Right cardiac atrium (tissue), 5 donors: ENCODE measurements at regions of chr2 and their contacts with region 1.

Region 1: DNA sequence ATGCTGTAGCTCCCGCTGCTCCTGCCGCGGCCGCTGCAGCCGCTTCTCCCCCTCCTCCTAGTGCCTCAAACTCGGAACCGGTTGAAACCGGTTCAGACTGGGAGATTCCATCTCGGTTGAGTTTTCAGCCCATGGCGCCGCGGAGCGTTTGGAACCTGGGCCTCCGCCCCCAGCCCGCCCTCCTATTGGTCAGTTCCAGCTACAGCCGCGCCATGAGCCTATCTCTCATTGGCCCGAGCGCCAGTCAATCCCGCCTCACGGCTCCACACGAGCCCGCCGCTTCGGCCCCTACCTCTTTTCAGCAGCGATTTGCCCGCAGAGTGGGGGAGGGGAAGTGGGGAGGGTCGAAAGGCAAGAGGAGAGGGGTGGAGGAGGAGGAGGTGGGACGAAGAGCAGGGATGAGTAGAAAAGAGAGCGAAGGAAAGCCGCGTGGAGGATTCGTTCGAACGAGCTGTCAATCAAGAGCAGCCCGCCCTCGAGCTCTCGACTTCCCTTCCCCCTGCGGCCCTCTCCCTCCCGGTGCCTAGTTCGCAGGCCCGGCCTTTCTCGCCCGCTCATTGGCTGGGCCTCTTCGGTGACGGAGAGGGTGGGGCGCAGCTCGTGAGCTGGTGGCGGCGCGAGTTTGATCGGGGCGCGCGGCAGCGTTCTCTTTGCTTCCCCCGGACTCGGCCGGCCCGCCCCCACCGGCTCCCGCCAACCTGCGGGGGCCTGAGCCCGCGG is at the start of gene XPO1:
- DNase-seq: peak; percentile 99 to 100 (median 100)
- ATAC-seq: peak; percentile 96
- H3K4me3 ChIP-seq: peak within 1 kb of the TSS; percentile 99
- H3K27ac ChIP-seq: peak within 1 kb of the TSS; percentile 99
- H3K4me1 ChIP-seq: peaks cover 2% of the 10 kb centered on the region
- H3K27me3 ChIP-seq: no peaks in the 10 kb centered on the region
- total RNA-seq, gene XPO1: 53.7 to 81.7 (median 62.2) TPM

Region 2: DNA sequence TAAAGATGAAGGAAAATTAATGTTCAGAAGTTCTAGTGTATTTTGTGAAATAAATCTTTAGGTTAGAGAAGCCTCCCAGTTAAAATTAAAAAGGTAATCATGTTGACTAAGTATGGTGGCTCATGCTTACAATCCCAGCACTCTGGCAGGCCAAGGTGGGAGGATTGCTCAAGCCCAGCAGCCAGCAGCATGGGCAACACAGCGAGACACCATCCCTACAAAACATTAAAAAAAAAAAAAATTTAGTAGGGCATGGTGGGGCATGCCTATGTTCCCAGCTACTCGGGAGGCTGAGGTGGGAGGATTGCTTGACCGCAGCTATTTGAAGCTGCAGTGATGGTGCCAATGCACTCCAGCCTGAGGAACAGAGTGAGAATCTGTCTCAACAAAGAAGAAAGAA is 18.1 kb before region 1 on chr2:
- intact Hi-C with region 1: no loop called
- DNase-seq: no peak
- ATAC-seq: no peak
- H3K4me3 ChIP-seq: no peak overlapping the region
- H3K27ac ChIP-seq: no peak overlapping the region
- H3K4me1 ChIP-seq: no peaks in the 10 kb centered on the region
- H3K27me3 ChIP-seq: no peaks in the 10 kb centered on the region

Region 3: DNA sequence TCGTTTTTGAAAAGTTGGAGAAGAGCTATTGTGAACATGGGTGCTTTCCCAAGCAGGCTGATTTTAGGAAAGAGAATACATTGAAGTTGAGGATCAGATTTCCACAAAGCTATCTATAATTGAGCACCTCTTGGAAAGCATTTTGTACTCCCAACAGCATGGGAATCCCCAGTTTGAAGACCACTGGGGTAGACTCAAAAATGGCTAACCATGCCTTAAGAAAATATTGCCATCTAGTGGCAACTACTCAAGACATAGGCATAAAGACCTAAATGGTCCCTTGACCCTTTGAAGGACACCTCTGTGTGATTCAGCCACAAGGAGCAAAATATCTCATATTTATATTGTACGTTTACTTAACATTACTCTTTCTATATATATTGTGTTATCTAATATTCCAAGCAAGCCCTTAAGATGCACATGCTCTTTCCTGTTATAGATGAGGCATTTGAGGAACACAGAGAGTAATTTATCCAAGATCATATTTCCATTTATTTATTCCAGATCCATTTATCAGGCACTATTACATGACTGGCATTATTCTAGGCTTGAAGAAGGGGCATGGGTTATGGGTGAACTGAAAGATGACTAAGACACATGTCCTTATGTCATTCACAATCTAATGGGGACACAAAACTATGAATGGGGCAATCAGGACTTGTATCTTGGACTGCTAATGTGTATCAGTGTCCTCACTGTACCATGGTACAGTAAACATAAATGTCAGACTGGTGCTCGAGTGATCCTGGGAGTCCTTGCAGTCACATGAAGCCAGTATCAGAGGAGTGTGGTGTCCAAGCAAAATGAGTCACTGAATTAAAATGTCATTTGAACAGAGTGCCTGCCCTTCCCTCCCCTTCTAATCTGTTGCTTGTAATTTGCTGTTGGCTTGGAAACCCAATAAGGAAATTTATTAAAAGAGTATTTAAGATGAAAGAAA is 120.8 kb after region 1 on chr2:
- intact Hi-C with region 1: loop called in 1 of 4 experiments (anchors 10 kb)
- DNase-seq: no peak
- ATAC-seq: peak; percentile 89 to 92
- H3K4me3 ChIP-seq: no peak overlapping the region
- H3K27ac ChIP-seq: peak overlapping the region; percentile 42
- H3K4me1 ChIP-seq: peaks cover 7% of the 10 kb centered on the region
- H3K27me3 ChIP-seq: no peaks in the 10 kb centered on the region

Region 4: GRCh38 chr2:61764035-61764800 is 225.9 kb after region 1 on chr2:
- intact Hi-C with region 1: loop called in 1 of 4 experiments (anchors 5 kb)
- DNase-seq: peak; percentile 98 to 99 (median 99)
- ATAC-seq: peak; percentile 100
- H3K4me3 ChIP-seq: peak overlapping the region; percentile 73
- H3K27ac ChIP-seq: peak overlapping the region; percentile 99
- H3K4me1 ChIP-seq: no peaks in the 10 kb centered on the region
- H3K27me3 ChIP-seq: no peaks in the 10 kb centered on the region

Region 5: DNA sequence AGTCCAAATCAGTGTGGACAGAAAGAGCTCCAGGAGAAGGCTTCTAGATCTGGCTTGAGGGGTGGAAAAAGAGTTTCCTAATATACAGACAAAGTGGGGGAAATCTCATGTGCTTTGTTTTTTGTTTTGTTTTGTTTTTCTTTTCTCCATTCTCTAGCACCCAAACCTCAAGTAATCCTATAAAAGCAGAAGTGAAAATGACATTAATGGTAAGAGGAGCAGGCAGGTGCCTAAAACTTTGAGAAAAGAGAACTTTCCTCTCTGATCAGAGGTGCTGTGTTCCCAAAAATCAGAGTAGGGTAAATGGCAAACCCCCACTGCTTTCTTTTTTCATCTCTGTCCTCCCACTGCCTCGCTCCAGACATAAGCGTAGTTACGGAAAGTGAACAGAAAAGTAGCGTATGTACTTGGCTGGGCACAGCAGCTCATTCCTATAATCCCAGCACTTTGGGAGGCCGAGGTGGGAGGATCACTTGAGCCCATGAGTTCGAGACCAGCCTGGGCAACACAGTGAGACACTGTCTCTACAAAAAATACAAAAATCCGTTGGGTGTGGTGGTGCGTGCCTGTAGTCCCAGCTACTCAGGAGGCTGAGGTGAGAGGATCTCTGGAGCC is 237.7 kb after region 1 on chr2:
- intact Hi-C with region 1: loop called in 1 of 4 experiments (anchors 10 kb)
- DNase-seq: no peak
- ATAC-seq: no peak
- H3K4me3 ChIP-seq: no peak overlapping the region
- H3K27ac ChIP-seq: no peak overlapping the region
- H3K4me1 ChIP-seq: no peaks in the 10 kb centered on the region
- H3K27me3 ChIP-seq: no peaks in the 10 kb centered on the region

Region 6: DNA sequence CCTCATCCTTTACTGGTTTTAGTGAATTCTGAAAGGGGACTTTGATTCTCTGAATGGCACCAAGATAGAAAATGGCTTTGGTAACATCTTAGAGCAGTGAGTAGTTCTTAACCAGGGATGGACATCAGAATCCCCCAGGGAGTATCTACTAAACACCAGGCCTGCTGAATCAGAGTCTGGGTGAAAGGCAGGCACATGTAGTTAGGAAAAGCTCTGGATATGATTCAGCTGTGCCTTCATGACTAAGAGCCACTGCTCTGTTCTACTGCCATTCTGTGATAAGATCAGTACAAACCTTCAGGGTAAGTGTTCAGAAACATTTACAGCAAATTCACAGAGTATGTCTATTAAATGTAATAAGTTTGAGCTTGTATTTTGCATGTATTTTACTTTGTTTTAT is 611.3 kb after region 1 on chr2:
- intact Hi-C with region 1: no loop called
- DNase-seq: no peak
- ATAC-seq: peak; percentile 56 to 74
- H3K4me3 ChIP-seq: no peak overlapping the region
- H3K27ac ChIP-seq: no peak overlapping the region
- H3K4me1 ChIP-seq: peaks cover 7% of the 10 kb centered on the region
- H3K27me3 ChIP-seq: no peaks in the 10 kb centered on the region